ENCODE measurements at regions of chr2 and their contacts with region 1.

Region 1: DNA sequence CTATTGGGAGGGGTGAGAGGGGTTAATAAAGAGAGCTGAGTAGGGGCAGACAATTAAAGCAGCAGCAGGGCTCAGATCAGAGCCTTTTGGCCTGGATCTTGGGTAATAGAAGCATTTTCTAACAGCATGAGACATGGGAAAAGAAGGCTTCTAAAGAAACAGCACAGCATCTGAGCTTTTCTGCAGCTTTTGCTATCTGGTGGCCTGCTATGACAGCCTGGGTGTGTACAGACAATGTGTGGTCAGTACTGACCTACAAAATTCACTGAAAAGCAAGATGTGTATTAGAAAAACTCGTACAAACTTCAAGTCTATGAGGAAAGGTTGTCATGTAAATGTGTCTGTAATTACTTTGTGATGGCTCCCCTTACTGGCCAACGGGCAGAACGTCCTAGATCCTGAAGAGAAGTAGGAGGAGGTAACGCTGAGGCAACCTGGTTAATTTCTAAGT is 95.6 kb downstream of the GALNT3 start:
- DNase-seq: peak; percentile 66
- H3K4me3 ChIP-seq: no peak overlapping the region
- H3K27ac ChIP-seq: no peak overlapping the region
- H3K4me1 ChIP-seq: peaks cover 23% of the 10 kb centered on the region
- CTCF ChIP-seq: peak; percentile 78

Region 2: DNA sequence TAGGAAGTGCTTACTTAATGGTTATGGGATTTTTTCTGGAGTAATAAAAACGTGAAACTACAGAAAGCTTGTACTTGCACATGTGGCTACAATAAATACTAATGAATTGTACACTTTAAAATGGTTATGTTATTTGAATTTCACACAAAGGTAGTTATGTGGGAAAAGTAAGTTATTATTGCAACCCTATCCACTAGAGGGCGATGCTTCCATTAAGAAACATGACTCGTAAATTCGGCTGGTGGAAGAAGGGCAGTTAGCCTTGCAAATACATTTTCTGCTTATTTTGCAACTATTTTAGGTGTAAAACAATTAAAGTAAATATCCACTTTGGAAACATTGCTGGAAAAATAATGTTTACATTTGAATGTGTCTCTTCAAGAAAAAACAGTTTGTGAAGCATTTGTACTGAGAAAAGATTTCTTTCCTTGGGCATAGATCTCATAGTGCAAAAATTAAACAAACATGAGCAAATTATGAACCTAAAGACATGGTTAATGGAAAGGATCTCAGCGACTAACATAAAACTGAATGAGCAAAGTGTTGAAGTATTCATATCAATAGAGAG is 297.1 kb before region 1 on chr2:
- CTCF ChIA-PET with region 1: no interaction called
- POLR2A ChIA-PET with region 1: interaction called, 3 read pairs
- intact Hi-C with region 1: loop called (anchors 1 kb)
- DNase-seq: peak; percentile 75
- H3K4me3 ChIP-seq: no peak overlapping the region
- H3K27ac ChIP-seq: no peak overlapping the region
- H3K4me1 ChIP-seq: no peaks in the 10 kb centered on the region
- CTCF ChIP-seq: peak; percentile 92

Region 3: DNA sequence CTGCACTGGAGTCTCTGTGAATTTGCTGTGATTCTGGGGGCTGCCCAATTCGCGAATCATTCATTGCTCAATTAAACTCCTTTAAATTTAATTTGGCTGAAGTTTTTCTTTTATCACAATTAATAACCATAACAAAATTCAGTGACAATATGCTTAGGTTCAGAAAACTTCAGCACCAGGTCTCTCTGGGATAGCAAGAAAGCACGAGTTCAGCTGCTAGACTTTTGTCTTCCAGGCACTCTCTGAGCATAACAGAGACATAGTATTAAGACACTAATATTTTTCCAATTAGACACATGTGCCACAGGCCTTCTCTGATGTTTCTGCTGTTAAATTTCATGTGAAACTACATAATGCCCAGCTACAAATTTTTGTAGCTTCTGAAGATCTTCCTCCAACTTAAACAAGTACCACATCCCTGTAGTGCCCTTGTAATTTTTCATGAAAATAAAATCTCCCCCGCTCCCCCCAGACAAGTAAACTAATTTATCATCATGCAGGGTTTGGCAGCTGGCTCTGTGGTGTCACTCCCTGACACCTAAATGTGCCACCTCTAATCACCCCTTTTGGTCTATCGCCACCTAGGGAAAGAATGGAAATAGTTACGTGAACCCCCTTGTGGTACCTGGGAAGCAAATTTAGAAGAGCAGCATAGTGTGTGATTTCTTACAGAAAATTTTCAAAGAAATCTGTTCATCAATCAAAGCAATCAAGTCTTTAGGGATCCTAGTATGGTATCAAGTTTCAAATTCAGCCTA is 134.8 kb before region 1 on chr2:
- CTCF ChIA-PET with region 1: no interaction called
- POLR2A ChIA-PET with region 1: interaction called, 4 read pairs
- intact Hi-C with region 1: loop called (anchors 2 kb)
- DNase-seq: peak; percentile 34
- H3K4me3 ChIP-seq: no peak overlapping the region
- H3K27ac ChIP-seq: no peak overlapping the region
- H3K4me1 ChIP-seq: peaks cover 7% of the 10 kb centered on the region
- CTCF ChIP-seq: peak; percentile 71

Region 4: GRCh38 chr2:165582409-165582808 is 116.1 kb before region 1 on chr2:
- CTCF ChIA-PET with region 1: no interaction called
- POLR2A ChIA-PET with region 1: interaction called, 3 read pairs
- intact Hi-C with region 1: loop called (anchors 5 kb)
- DNase-seq: no peak
- H3K4me3 ChIP-seq: no peak overlapping the region
- H3K27ac ChIP-seq: no peak overlapping the region
- H3K4me1 ChIP-seq: peaks cover 42% of the 10 kb centered on the region
- CTCF ChIP-seq: no peak

Region 5: GRCh38 chr2:165874445-165875039 is 176.1 kb after region 1 on chr2:
- CTCF ChIA-PET with region 1: no interaction called
- POLR2A ChIA-PET with region 1: interaction called, 4 read pairs
- intact Hi-C with region 1: loop called (anchors 5 kb)
- DNase-seq: peak; percentile 81
- H3K4me3 ChIP-seq: no peak overlapping the region
- H3K27ac ChIP-seq: no peak overlapping the region
- H3K4me1 ChIP-seq: peaks cover 6% of the 10 kb centered on the region
- CTCF ChIP-seq: peak; percentile 88

Region 6: GRCh38 chr2:166067229-166067628 is 368.8 kb after region 1 on chr2:
- CTCF ChIA-PET with region 1: no interaction called
- POLR2A ChIA-PET with region 1: no interaction called
- intact Hi-C with region 1: no loop called
- DNase-seq: no peak
- H3K4me3 ChIP-seq: no peak overlapping the region
- H3K27ac ChIP-seq: no peak overlapping the region
- H3K4me1 ChIP-seq: no peaks in the 10 kb centered on the region
- CTCF ChIP-seq: no peak

Region 7: DNA sequence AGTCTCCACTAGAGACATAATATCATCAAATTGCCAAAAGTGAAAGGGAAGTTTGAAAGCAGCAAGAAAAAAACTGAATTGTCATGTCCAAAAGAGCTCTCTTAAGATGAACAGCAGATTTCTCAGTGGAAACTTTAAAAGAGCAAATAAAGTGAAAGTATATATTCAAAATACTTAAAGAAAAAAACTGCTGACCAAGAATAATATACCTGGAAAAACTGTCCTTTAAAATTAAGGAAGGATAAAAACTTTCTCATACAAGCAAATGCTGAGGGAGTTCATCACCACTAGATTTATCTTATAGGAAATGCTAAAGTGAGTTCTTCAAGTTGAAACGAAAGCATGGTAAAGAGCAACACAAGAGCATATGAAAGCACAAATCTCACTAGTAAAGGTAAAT is 512.6 kb after region 1 on chr2:
- CTCF ChIA-PET with region 1: no interaction called
- POLR2A ChIA-PET with region 1: no interaction called
- intact Hi-C with region 1: no loop called
- DNase-seq: no peak
- H3K4me3 ChIP-seq: no peak overlapping the region
- H3K27ac ChIP-seq: no peak overlapping the region
- H3K4me1 ChIP-seq: no peaks in the 10 kb centered on the region
- CTCF ChIP-seq: no peak